ENCODE measurements at regions of chrX and their contacts with region 1.

Region 1: DNA sequence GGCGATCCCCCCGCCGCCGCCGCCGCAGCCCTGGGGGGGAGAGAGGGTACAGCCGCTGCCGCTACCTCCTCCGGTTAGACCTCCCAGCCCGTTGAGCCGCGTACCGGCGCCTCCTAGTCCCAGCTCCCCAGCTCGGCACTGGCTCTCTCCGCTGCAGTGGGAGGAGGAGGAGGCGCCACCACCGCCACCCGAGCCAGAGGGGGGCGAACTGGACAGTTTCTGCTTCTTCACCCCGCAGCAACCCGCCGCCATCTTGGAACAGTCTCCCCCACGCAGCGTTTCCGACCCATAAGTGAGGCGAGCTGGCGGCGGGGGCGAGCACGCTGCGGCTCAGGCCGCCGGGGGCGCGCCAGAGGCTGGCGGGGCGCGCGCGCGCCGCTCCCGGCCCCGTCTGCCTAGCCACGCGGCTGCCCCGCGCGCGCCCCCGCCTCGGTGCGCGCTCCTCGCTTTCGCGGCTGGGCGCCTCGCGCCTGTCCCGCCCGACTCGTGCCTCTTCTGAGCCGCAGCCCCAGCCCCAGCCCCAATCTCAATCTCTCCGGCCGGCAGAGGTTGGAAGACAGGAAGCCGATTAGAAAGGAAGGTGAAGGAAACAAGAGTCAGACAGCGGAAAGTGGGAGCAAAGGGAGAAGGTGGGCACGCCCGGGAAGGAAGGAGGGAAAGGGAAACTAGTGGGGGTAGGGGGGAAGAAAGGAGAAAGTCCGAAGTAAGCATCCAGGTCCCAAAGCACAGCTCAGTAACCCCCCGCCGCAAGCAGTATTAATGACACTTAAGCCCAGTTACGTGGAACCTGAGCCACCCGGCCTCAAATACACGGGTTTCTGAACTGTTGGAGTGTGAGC is at the start of gene AMMECR1:
- DNase-seq: peak; percentile 81
- H3K4me3 Mint-ChIP-seq: peak within 1 kb of the TSS; percentile 90
- H3K27ac Mint-ChIP-seq: peak within 1 kb of the TSS; percentile 89
- H3K4me1 Mint-ChIP-seq: peaks cover 29% of the 10 kb centered on the region
- H3K27me3 Mint-ChIP-seq: no peaks in the 10 kb centered on the region
- total RNA-seq, gene AMMECR1: 12.6 to 12.8 TPM

Region 2: DNA sequence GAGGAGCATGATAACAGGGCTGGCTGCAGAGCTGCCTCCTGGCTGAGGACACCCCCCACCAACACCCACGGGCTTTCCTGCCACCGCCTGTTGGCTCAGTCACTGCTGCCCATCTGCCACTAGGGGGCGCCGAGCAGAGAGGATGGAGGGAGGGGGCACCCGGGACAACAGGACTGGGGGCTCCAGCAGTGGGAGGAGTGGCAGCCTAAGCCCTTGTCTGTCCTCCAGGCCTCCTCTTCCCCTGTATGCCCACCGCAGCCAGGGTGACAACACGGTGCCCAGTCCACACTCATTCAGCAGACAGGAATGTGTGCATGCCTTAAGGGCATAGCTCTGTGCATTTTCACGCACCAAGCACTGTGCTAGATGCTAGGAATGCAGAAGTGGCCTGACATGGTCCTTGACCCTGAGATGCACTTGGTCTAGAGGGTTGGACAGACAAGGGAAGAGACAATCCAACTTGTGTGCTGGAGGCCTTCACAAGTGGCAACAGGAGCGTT is 150.0 kb before region 1 on chrX:
- CTCF ChIA-PET with region 1: interaction called, 12 read pairs
- POLR2A ChIA-PET with region 1: interaction called, 3 read pairs
- DNase-seq: peak; percentile 54
- H3K4me3 Mint-ChIP-seq: no peak overlapping the region
- H3K27ac Mint-ChIP-seq: no peak overlapping the region
- H3K4me1 Mint-ChIP-seq: no peaks in the 10 kb centered on the region
- H3K27me3 Mint-ChIP-seq: no peaks in the 10 kb centered on the region

Region 3: GRCh38 chrX:110180176-110180927 is 137.7 kb before region 1 on chrX:
- CTCF ChIA-PET with region 1: interaction called, 3 read pairs
- POLR2A ChIA-PET with region 1: interaction called, 11 read pairs
- DNase-seq: no peak
- H3K4me3 Mint-ChIP-seq: no peak overlapping the region
- H3K27ac Mint-ChIP-seq: no peak overlapping the region
- H3K4me1 Mint-ChIP-seq: peaks cover 6% of the 10 kb centered on the region
- H3K27me3 Mint-ChIP-seq: no peaks in the 10 kb centered on the region

Region 4: GRCh38 chrX:110226931-110227330 is 91.1 kb before region 1 on chrX:
- CTCF ChIA-PET with region 1: interaction called, 9 read pairs
- POLR2A ChIA-PET with region 1: interaction called, 25 read pairs
- DNase-seq: no peak
- H3K4me3 Mint-ChIP-seq: no peak overlapping the region
- H3K27ac Mint-ChIP-seq: no peak overlapping the region
- H3K4me1 Mint-ChIP-seq: peaks cover 28% of the 10 kb centered on the region
- H3K27me3 Mint-ChIP-seq: no peaks in the 10 kb centered on the region

Region 5: DNA sequence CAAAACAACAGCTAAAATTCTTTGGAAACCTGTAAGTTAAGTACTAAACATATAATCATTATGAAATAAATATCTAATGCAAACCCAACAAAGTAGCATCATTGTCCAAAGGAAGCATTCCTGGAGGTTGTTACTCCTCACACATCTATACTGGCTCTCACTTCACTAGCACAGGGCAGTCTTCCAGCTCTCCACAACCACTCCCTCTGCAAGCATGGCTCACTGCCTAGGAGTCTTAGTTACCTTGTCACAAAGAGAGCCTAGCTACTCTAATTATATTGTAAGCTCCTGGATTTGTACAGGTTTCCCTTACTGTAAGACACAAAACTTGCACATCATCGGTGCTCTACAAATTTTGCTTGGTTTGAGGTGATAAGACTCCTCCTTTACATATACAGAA is 76.2 kb before region 1 on chrX:
- CTCF ChIA-PET with region 1: no interaction called
- POLR2A ChIA-PET with region 1: interaction called, 15 read pairs
- DNase-seq: no peak
- H3K4me3 Mint-ChIP-seq: no peak overlapping the region
- H3K27ac Mint-ChIP-seq: no peak overlapping the region
- H3K4me1 Mint-ChIP-seq: peaks cover 45% of the 10 kb centered on the region
- H3K27me3 Mint-ChIP-seq: no peaks in the 10 kb centered on the region